Panc1 (cell line): ENCODE measurements at regions of chr20 and their contacts with region 1.

Region 1: GRCh38 chr20:4720041-4720976 is 1.4 kb upstream of the PRND start:
- DNase-seq: peak; percentile 39
- ATAC-seq: peak; percentile 83
- H3K4me3 ChIP-seq: no peak overlapping the region
- H3K27ac ChIP-seq: no peak overlapping the region
- H3K4me1 ChIP-seq: no peaks in the 10 kb centered on the region; the same call in 1 of the 2 replicates
- H3K27me3 ChIP-seq: peaks cover 2% of the 10 kb centered on the region; the same call in 1 of the 2 replicates
- CTCF ChIP-seq: peak; percentile 83

Region 2: DNA sequence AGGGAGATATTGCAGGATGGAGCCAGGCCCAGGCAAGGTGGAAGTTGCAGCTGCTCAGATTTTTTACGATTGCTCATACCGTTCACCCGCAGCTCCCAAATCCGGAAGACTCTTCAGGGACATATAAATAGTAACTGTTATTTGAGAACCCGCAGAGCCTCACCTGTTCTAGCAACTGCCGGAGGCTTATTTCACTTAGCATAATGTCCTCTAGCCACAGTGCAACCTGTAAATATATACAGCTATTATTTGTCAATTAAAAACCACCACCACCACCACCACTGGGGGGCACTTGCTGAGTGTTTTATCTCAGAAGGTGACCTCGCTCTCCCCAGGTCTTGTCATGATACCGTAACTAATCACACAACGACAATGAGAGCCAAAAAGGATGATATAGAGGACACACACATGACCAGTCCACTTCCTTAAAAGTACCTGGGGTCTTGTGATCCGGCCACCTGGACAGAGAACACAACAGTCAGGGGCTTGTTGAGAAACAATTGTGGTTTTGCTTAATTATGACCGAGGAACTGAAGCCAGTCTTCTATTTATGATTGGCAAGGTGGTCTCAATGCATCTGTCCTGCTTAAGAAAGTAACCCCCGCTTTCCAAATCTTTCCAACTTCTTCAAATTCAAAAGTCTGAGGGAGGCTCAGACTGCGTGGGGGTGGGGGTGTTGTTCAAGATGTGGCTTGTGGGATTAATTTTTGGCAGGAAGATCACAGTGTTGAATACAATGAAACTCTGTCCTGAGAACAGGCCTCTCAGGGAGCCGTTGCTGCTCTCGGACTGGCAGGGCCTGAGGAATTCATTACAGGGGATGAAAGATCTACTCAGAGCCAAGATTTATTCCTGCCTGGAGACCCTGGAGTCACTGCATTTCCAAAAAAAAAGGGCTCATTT is 106.3 kb before region 1 on chr20:
- CTCF ChIA-PET with region 1: interaction called, 3 read pairs
- POLR2A ChIA-PET with region 1: no interaction called
- in situ Hi-C with region 1: no loop called
- intact Hi-C with region 1: loop called (anchors 2 kb)
- DNase-seq: peak; percentile 18
- ATAC-seq: peak; percentile 85
- H3K4me3 ChIP-seq: no peak overlapping the region
- H3K27ac ChIP-seq: no peak overlapping the region
- H3K4me1 ChIP-seq: no peaks in the 10 kb centered on the region
- H3K27me3 ChIP-seq: no peaks in the 10 kb centered on the region
- CTCF ChIP-seq: peak; percentile 74